Activated CD4-positive, alpha-beta T cell treated with anti-CD3 and anti-CD28 coated beads, Interleukin-2, amount 10 ng/mL, durations not matched to agents 24 days and 14 days (primary cell): ENCODE measurements at regions of chr2 and their contacts with region 1.

Region 1: DNA sequence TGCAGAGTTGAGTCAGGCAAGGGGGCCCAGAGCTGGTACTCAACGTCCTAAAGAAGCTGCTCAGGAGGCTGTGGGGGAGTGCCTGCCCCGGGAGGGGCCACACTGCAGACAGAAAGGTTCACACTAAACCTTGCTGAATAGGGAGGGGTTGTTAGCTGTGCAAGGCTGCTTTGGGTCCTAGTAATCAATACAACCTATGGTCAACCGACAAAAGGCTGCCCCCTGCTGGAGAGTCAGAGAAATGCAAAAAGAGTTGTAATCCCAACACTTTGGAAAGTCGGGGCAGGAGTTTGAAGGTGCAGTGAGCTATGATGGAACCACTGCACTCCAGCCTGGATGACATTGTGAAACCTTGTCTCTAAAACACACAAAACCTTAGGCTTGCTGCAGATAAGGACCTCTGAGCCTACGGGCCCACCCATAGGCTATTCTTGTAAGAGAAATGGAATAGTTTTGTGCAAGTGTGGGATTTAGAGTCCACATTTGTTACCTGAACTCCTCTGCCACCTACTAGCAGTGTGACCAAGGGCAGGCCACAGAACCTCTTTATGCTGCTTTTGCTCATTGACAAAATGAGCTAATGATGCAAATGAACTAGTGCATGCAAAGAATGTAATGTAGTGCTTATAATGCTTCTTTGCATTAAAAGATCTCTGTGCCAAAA is 81.5 kb downstream of the PRPF40A start:
- DNase-seq: peak; percentile 91
- H3K4me3 Mint-ChIP-seq: no peak overlapping the region
- H3K27ac Mint-ChIP-seq: no peak overlapping the region
- H3K4me1 Mint-ChIP-seq: no peaks in the 10 kb centered on the region
- H3K27me3 Mint-ChIP-seq: no peaks in the 10 kb centered on the region

Region 2: DNA sequence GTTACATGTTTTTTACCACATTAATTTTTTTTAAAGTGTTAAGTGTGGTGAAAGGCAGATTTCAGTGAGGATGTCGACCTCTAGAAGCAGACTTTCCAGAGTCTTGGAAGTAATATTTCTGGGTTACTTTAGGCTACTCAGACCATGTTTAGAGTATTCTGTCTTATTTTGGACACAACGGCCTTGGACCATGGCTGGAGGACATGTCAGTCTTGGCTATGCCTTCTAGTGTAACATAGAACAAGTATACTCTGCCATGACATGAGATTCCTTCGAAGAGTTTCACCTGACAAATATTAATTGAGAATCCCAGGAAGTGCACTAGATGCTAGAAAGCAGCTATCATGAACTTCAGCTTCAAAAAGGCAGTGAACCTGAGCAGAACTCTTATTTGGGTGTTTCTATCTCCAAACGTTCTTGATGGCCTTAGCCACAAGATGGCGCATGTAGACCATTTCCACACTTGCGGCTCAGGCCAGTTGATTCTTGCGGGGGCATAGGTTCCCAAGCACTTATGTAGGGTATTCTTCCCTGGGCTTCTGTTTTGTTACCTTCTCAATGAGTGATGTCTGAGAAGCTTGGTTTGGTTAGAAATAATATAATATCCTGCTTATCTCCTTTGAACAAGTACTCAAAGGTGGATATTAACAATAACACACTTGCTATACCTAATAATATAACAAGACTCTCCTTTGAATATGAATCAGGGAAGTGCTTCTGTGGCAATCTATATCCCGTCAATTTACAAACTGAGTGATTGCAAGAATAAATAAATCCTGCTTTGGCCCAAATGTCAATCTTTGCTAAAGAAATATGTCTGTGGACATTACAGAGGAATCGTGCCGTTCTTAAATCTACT is 598.9 kb before region 1 on chr2:
- intact Hi-C with region 1: loop called (anchors 1 kb)
- DNase-seq: peak; percentile 85
- H3K4me3 Mint-ChIP-seq: no peak overlapping the region
- H3K27ac Mint-ChIP-seq: no peak overlapping the region
- H3K4me1 Mint-ChIP-seq: no peaks in the 10 kb centered on the region
- H3K27me3 Mint-ChIP-seq: peaks cover under 1% of the 10 kb centered on the region

Region 3: GRCh38 chr2:152189622-152190495 is 445.9 kb before region 1 on chr2:
- intact Hi-C with region 1: loop called (anchors 1 kb)
- DNase-seq: peak; percentile 70
- H3K4me3 Mint-ChIP-seq: no peak overlapping the region
- H3K27ac Mint-ChIP-seq: no peak overlapping the region
- H3K4me1 Mint-ChIP-seq: peaks cover 2% of the 10 kb centered on the region
- H3K27me3 Mint-ChIP-seq: peaks cover 15% of the 10 kb centered on the region

Region 4: GRCh38 chr2:152558158-152558984 is 77.4 kb before region 1 on chr2:
- intact Hi-C with region 1: no loop called
- DNase-seq: no peak
- H3K4me3 Mint-ChIP-seq: no peak overlapping the region
- H3K27ac Mint-ChIP-seq: no peak overlapping the region
- H3K4me1 Mint-ChIP-seq: peaks cover 3% of the 10 kb centered on the region
- H3K27me3 Mint-ChIP-seq: peaks cover 6% of the 10 kb centered on the region